HEK293 (cell line): ENCODE measurements at regions of chr1 and their contacts with region 1.

Region 1: DNA sequence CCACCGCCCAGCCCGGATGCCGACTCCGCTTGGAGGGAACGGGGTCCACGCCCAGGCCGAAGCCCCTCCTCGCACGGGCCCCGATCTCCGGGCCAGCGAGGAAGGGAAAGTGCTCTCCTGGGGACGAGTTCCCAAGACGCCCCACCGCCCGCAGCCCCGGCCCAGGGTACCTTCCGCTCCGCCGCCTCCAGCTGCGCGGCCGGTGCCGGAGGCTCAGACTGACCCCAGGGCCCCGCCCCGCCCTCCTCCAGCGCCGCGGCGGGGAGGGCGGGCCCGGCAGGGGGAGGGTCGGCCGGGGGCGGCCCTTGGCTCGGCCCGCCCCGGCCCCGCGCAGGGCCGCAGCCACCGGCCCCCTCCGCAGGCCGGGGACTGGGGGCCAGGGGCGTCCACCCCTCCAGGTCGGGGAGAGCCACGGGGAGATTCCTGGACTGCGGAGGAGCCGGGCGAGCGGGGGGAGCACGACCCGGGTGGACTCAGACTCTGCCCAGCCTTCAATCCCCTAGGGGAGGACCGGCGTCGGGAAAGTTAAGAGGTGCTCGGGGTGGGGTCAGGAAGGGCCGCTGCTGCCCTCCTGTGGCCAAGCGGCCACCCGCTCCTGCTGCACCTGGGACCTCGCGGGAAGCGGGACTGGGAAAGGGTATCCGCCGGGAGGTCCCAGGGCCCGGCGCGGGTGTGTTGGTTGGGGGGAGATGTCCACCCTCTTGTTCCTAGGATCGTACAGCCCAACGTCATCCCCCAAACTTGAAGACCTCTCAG is at the start of gene RHOC:
- H3K4me3 ChIP-seq: peak within 1 kb of the TSS; percentile 80
- H3K27ac ChIP-seq: peak within 1 kb of the TSS; percentile 79
- H3K4me1 ChIP-seq: peaks cover 5% of the 10 kb centered on the region
- CTCF ChIP-seq: peak; percentile 97

Region 2: GRCh38 chr1:112395821-112396652 is 311.0 kb before region 1 on chr1 and contains the start of gene CTTNBP2NL:
- CTCF ChIA-PET with region 1: interaction called, 20 read pairs
- POLR2A ChIA-PET with region 1: interaction called, 7 read pairs
- H3K4me3 ChIP-seq: peak within 1 kb of the TSS; percentile 71
- H3K27ac ChIP-seq: peak within 1 kb of the TSS; percentile 8; the same call in 1 of the 2 replicates
- H3K4me1 ChIP-seq: peaks cover 16% of the 10 kb centered on the region
- CTCF ChIP-seq: no peak

Region 3: GRCh38 chr1:112619520-112620376 is 87.3 kb before region 1 on chr1 and contains the start of gene CAPZA1:
- CTCF ChIA-PET with region 1: interaction called, 7 read pairs
- POLR2A ChIA-PET with region 1: interaction called, 12 read pairs
- H3K4me3 ChIP-seq: peak within 1 kb of the TSS; percentile 99
- H3K27ac ChIP-seq: peak within 1 kb of the TSS; percentile 94
- H3K4me1 ChIP-seq: no peaks in the 10 kb centered on the region
- CTCF ChIP-seq: peak; percentile 79

Region 4: DNA sequence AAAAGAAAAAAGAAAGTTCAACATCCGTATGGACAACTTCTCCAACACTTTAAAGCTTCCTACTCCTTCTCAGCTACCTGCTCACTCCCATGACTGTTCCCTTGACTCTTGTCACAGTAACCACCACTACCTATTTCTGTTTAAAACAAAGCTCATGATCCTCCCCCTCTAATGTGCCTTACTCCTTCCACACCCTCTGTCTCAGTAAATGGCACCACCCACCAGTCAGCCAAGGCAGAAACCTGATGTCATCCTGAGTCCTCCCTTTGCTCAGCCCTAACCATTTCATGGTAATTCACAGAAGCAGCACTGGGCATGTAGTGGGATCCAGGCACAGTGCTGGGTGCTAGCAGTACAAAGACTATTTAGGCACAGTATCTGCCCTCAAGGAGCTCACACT is 71.1 kb after region 1 on chr1:
- CTCF ChIA-PET with region 1: no interaction called
- POLR2A ChIA-PET with region 1: no interaction called
- H3K4me3 ChIP-seq: no peak overlapping the region
- H3K27ac ChIP-seq: no peak overlapping the region
- H3K4me1 ChIP-seq: no peaks in the 10 kb centered on the region
- CTCF ChIP-seq: no peak